Activated CD4-positive, alpha-beta memory T cell treated with anti-CD3 and anti-CD28 coated beads, Interleukin-2, amount 10 ng/mL, durations not matched to agents 7 days and 5 days (primary cell): ENCODE measurements at regions of chr3 and their contacts with region 1.

Region 1: DNA sequence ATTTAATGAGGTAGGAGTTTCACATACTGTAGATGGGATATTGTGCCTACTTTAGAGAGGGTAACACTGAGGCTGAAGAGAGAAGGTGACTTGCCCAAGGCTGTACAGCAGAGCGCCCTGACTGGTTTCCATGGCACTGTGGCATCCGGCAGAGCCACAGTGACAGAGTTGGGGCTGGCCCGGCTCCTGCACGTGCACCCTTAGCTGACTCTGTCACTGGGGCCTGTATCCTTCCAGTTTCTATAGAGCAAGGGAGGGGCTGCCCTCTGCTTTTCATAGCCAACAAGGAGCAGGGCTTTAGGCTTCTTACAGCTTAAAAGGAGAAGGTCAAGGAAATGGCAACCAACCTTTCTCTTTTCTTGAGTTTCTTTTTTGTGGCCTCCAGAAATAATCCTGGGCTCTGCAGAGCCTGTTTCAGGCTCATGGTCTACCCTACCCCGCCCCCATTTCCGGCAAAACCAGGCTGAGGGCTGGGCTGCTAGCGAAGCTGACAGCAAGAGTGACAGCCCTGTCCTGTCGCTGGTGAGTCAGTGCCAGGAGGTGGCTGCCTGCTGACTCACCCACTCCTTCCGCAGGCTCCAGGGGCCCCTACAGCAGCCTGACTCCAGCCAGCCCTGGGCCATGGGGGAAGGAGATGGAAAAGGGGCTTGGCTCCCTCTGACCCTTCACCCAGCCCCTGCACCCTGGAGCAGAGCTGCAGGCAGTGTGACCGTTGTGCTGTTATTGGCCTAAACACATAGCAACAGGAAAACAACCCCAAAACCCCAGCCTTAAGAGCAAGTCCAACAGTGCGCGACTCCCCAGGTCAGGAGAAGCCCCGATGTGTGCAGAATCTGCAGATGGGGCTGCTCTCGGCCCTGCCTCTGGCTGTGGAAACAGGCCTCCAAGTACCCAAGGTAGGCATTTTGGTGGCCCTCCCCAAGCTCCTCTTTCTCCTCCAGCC is 29.8 kb downstream of the SLC6A6 start:
- DNase-seq: peak; percentile 96
- H3K4me3 Mint-ChIP-seq: peak overlapping the region; percentile 75
- H3K27ac Mint-ChIP-seq: peak overlapping the region; percentile 100
- H3K4me1 Mint-ChIP-seq: peaks cover 89% of the 10 kb centered on the region
- H3K27me3 Mint-ChIP-seq: no peaks in the 10 kb centered on the region

Region 2: DNA sequence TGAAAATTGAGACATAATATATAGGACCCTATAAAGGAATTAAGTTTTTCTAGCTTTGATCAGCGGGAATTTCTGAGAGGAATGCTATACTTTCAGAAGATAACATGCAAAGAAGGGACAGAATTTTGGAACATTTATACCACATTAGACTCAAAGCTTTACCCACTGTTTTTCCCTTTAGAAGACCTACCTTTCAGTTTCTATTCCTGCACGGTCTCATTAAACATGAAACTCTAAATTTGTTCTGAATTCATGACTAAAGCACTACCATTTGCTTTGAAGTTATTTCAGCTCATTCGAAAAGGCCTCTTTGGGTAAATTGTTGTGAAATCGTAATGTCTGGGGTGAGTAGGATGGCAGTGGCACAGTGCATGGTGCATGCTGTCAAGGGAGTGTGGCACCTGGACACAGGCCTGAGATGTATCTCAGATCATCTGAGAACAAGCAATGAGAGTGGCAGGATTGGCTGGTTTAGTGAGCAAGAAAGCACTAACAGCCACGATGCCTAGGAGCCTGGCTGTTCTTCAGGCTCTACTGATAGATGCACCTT is 350.0 kb before region 1 on chr3:
- CTCF ChIA-PET with region 1: no interaction called
- POLR2A ChIA-PET with region 1: no interaction called
- DNase-seq: no peak
- H3K4me3 Mint-ChIP-seq: no peak overlapping the region
- H3K27ac Mint-ChIP-seq: peak overlapping the region; percentile 56
- H3K4me1 Mint-ChIP-seq: peaks cover 7% of the 10 kb centered on the region
- H3K27me3 Mint-ChIP-seq: no peaks in the 10 kb centered on the region

Region 3: GRCh38 chr3:14458434-14459280 is 26.5 kb after region 1 on chr3:
- CTCF ChIA-PET with region 1: interaction called, 7 read pairs
- POLR2A ChIA-PET with region 1: interaction called, 16 read pairs
- DNase-seq: no peak
- H3K4me3 Mint-ChIP-seq: no peak overlapping the region
- H3K27ac Mint-ChIP-seq: peak overlapping the region; percentile 59
- H3K4me1 Mint-ChIP-seq: peaks cover 13% of the 10 kb centered on the region
- H3K27me3 Mint-ChIP-seq: no peaks in the 10 kb centered on the region